B cell (primary cell): ENCODE measurements at regions of chr16 and their contacts with region 1.

Region 1: GRCh38 chr16:25224731-25225319 is 8.1 kb downstream of the AQP8 start:
- DNase-seq: peak; percentile 12
- ATAC-seq: no peak
- H3K4me3 ChIP-seq: no peak overlapping the region
- H3K4me3 Mint-ChIP-seq: no peak overlapping the region
- H3K27ac ChIP-seq: no peak overlapping the region
- H3K27ac Mint-ChIP-seq: peak overlapping the region; percentile 73
- H3K4me1 ChIP-seq: peaks cover 0 to 3% of the 10 kb centered on the region in 2 donors
- H3K4me1 Mint-ChIP-seq: no peaks in the 10 kb centered on the region
- H3K27me3 ChIP-seq: no peaks in the 10 kb centered on the region
- H3K27me3 Mint-ChIP-seq: no peaks in the 10 kb centered on the region
- CTCF ChIP-seq: no peak

Region 2: GRCh38 chr16:24906199-24907020 is 318.4 kb before region 1 on chr16:
- CTCF ChIA-PET with region 1: interaction called, 16 read pairs
- POLR2A ChIA-PET with region 1: no interaction called
- intact Hi-C with region 1: no loop called
- DNase-seq: no peak
- ATAC-seq: no peak
- H3K4me3 ChIP-seq: no peak overlapping the region
- H3K4me3 Mint-ChIP-seq: no peak overlapping the region
- H3K27ac ChIP-seq: no peak overlapping the region
- H3K27ac Mint-ChIP-seq: no peak overlapping the region
- H3K4me1 ChIP-seq: no peaks in the 10 kb centered on the region
- H3K4me1 Mint-ChIP-seq: peaks cover 4% of the 10 kb centered on the region
- H3K27me3 ChIP-seq: no peaks in the 10 kb centered on the region
- H3K27me3 Mint-ChIP-seq: no peaks in the 10 kb centered on the region
- CTCF ChIP-seq: peak; percentile 27

Region 3: GRCh38 chr16:24943473-24943872 is 281.4 kb before region 1 on chr16:
- CTCF ChIA-PET with region 1: no interaction called
- POLR2A ChIA-PET with region 1: no interaction called
- intact Hi-C with region 1: loop called (anchors 10 kb)
- DNase-seq: no peak
- ATAC-seq: no peak
- H3K4me3 ChIP-seq: no peak overlapping the region
- H3K4me3 Mint-ChIP-seq: no peak overlapping the region
- H3K27ac ChIP-seq: no peak overlapping the region
- H3K27ac Mint-ChIP-seq: peak overlapping the region; percentile 28
- H3K4me1 ChIP-seq: no peaks in the 10 kb centered on the region
- H3K4me1 Mint-ChIP-seq: no peaks in the 10 kb centered on the region
- H3K27me3 ChIP-seq: no peaks in the 10 kb centered on the region
- H3K27me3 Mint-ChIP-seq: no peaks in the 10 kb centered on the region
- CTCF ChIP-seq: no peak

Region 4: GRCh38 chr16:25051406-25052150 is 173.2 kb before region 1 on chr16:
- CTCF ChIA-PET with region 1: interaction called, 42 read pairs
- POLR2A ChIA-PET with region 1: no interaction called
- intact Hi-C with region 1: no loop called
- DNase-seq: no peak
- ATAC-seq: no peak
- H3K4me3 ChIP-seq: peak overlapping the region in 1 of 5 experiments; percentile 24
- H3K4me3 Mint-ChIP-seq: peak overlapping the region; percentile 66
- H3K27ac ChIP-seq: peak overlapping the region in 1 of 2 donors; percentile 27
- H3K27ac Mint-ChIP-seq: peak overlapping the region; percentile 74
- H3K4me1 ChIP-seq: peaks cover 34 to 38% of the 10 kb centered on the region in 2 donors
- H3K4me1 Mint-ChIP-seq: peaks cover 41% of the 10 kb centered on the region
- H3K27me3 ChIP-seq: no peaks in the 10 kb centered on the region
- H3K27me3 Mint-ChIP-seq: no peaks in the 10 kb centered on the region
- CTCF ChIP-seq: no peak

Region 5: GRCh38 chr16:25060920-25061319 is 163.9 kb before region 1 on chr16:
- CTCF ChIA-PET with region 1: interaction called, 42 read pairs
- POLR2A ChIA-PET with region 1: no interaction called
- intact Hi-C with region 1: no loop called
- DNase-seq: peak; percentile 75
- ATAC-seq: peak; percentile 98
- H3K4me3 ChIP-seq: peak overlapping the region in 1 of 5 experiments; percentile 8
- H3K4me3 Mint-ChIP-seq: peak overlapping the region; percentile 49
- H3K27ac ChIP-seq: peak overlapping the region; percentile 72 to 93
- H3K27ac Mint-ChIP-seq: peak overlapping the region; percentile 92
- H3K4me1 ChIP-seq: peaks cover 42 to 58% of the 10 kb centered on the region in 2 donors
- H3K4me1 Mint-ChIP-seq: peaks cover 46% of the 10 kb centered on the region
- H3K27me3 ChIP-seq: no peaks in the 10 kb centered on the region
- H3K27me3 Mint-ChIP-seq: no peaks in the 10 kb centered on the region
- CTCF ChIP-seq: no peak

Region 6: DNA sequence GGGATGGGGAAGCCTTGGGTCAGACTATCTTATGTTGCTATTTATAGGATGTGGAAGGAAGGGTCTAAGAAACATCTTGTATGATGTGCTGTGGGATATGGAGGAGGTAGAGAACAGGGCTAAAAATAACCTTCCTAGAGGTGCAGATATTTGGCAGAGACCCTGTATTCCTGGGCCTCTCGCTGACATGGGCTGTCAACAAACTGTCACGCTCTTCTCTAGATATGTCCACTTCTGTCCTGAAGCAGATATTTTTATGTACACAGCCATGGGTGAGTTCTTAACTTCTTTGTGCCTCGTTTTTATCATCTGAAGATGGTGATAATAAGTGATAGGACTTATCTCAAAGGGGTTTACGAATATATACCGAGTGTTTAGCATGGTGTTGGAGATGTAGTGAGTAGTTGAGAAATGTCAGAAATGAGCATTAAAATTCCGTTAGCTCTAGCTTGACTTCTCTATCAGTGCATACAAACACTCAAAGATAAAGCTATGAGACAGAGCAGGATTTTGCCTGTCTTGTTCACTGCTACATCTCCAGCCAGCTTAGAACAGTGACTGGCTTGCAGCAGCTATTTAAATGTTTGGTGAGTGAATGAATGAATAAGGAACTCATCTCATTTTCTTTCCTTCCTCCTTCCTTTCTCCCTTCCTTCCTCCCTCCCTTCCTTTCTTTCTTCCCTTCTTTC is 11.0 kb before region 1 on chr16:
- CTCF ChIA-PET with region 1: interaction called, 13 read pairs
- POLR2A ChIA-PET with region 1: no interaction called
- intact Hi-C with region 1: no loop called
- DNase-seq: no peak
- ATAC-seq: no peak
- H3K4me3 ChIP-seq: no peak overlapping the region
- H3K4me3 Mint-ChIP-seq: no peak overlapping the region
- H3K27ac ChIP-seq: no peak overlapping the region
- H3K27ac Mint-ChIP-seq: no peak overlapping the region
- H3K4me1 ChIP-seq: no peaks in the 10 kb centered on the region
- H3K4me1 Mint-ChIP-seq: no peaks in the 10 kb centered on the region
- H3K27me3 ChIP-seq: no peaks in the 10 kb centered on the region
- H3K27me3 Mint-ChIP-seq: peaks cover 14% of the 10 kb centered on the region
- CTCF ChIP-seq: no peak

Region 7: GRCh38 chr16:25235991-25236390 is 11.2 kb after region 1 on chr16:
- CTCF ChIA-PET with region 1: interaction called, 45 read pairs
- POLR2A ChIA-PET with region 1: no interaction called
- intact Hi-C with region 1: no loop called
- DNase-seq: no peak
- ATAC-seq: no peak
- H3K4me3 ChIP-seq: no peak overlapping the region
- H3K4me3 Mint-ChIP-seq: no peak overlapping the region
- H3K27ac ChIP-seq: no peak overlapping the region
- H3K27ac Mint-ChIP-seq: no peak overlapping the region
- H3K4me1 ChIP-seq: peaks cover 0 to 2% of the 10 kb centered on the region in 2 donors
- H3K4me1 Mint-ChIP-seq: peaks cover 2% of the 10 kb centered on the region
- H3K27me3 ChIP-seq: no peaks in the 10 kb centered on the region
- H3K27me3 Mint-ChIP-seq: no peaks in the 10 kb centered on the region
- CTCF ChIP-seq: no peak